Activated CD8-positive, alpha-beta T cell treated with anti-CD3 and anti-CD28 coated beads for 36 hours (primary cell): ENCODE measurements at regions of chr1 and their contacts with region 1.

Region 1: DNA sequence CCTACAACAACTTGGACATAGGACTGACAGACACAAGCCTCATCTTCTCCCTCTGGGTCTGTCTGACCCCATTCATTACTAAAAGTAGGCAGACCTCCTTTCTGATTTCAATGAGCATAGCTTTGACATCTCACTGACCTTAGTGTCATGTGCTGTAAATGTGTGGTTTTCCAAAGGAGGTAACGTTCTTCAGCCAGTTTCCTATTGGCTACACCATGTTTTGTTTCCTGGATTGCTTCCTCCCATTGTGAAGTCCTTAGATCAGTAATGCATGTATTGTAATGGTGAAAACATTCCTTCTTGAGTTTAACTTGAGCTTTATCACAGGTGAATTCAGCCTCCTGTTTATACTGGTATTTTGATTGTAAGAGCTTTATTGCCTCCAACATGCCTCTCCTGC is 20.6 kb downstream of the STXBP3 start:
- DNase-seq: no peak
- ATAC-seq: no peak
- H3K4me3 Mint-ChIP-seq: no peak overlapping the region
- H3K27ac Mint-ChIP-seq: no peak overlapping the region
- H3K4me1 Mint-ChIP-seq: peaks cover 4% of the 10 kb centered on the region
- H3K27me3 Mint-ChIP-seq: no peaks in the 10 kb centered on the region
- CTCF ChIP-seq: no peak

Region 2: DNA sequence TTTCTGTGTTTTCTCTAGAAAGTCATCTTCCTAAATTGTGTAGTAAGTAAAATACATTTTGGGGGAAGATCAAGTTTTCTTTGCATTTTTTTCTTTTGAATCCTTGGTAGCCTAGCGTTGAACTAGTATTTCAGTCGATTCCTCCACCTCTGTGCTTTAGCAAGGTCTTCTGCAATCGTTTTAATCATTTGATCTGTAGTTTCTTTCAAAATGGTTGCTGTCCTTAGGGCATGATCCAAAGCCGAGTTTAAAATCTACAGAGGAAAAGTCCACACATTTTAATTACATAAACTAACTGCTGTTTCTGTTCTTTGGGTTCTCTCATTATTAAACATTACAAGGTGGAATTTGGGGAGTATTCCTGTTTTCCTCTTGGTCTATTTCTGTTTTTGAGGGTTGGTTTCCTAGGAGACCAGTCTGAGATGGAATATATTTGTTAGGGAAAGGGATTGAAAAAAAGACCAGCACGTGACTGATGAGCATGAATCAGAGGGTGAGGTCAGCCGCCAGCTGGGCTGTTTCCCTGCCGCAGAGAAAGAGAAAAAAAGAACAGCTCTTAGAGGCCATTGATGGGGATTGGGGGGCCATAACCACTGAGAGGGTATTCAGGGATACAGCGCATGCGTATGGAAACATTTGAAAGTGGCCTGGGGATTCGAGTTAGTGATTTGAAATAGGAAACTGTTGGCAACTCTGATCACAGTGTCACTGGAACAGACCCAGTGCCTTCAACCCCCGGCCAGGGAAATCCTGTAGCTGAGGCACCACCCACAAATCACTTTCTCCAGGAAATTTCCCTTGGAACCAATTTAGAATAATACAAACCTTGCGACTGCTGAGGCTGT is 49.2 kb after region 1 on chr1:
- CTCF ChIA-PET with region 1: no interaction called
- POLR2A ChIA-PET with region 1: no interaction called
- intact Hi-C with region 1: loop called (anchors 5 kb)
- DNase-seq: no peak
- ATAC-seq: no peak
- H3K4me3 Mint-ChIP-seq: no peak overlapping the region
- H3K27ac Mint-ChIP-seq: no peak overlapping the region
- H3K4me1 Mint-ChIP-seq: no peaks in the 10 kb centered on the region
- H3K27me3 Mint-ChIP-seq: no peaks in the 10 kb centered on the region
- CTCF ChIP-seq: no peak

Region 3: DNA sequence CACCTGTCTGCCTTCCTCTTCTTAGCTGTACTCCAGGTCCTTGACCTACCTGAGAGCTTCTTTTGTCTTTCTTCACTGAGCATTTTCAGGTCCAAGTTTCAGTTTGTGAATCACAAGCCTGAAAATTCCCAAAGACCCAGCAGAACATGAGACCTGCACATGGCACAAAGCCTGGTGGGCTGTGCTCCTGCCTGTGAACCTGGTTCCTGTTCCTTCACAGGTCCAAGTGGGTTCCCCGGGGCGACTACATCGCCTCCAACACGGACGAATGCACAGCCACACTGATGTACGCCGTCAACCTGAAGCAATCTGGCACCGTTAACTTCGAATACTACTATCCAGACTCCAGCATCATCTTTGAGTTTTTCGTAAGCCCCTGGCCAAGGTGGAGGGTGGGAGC is 404.5 kb after region 1 on chr1:
- CTCF ChIA-PET with region 1: no interaction called
- POLR2A ChIA-PET with region 1: no interaction called
- intact Hi-C with region 1: no loop called
- DNase-seq: no peak
- ATAC-seq: no peak
- H3K4me3 Mint-ChIP-seq: no peak overlapping the region
- H3K27ac Mint-ChIP-seq: no peak overlapping the region
- H3K4me1 Mint-ChIP-seq: no peaks in the 10 kb centered on the region
- H3K27me3 Mint-ChIP-seq: no peaks in the 10 kb centered on the region
- CTCF ChIP-seq: no peak